ENCODE measurements at regions of chr17 and their contacts with region 1.

Region 1: DNA sequence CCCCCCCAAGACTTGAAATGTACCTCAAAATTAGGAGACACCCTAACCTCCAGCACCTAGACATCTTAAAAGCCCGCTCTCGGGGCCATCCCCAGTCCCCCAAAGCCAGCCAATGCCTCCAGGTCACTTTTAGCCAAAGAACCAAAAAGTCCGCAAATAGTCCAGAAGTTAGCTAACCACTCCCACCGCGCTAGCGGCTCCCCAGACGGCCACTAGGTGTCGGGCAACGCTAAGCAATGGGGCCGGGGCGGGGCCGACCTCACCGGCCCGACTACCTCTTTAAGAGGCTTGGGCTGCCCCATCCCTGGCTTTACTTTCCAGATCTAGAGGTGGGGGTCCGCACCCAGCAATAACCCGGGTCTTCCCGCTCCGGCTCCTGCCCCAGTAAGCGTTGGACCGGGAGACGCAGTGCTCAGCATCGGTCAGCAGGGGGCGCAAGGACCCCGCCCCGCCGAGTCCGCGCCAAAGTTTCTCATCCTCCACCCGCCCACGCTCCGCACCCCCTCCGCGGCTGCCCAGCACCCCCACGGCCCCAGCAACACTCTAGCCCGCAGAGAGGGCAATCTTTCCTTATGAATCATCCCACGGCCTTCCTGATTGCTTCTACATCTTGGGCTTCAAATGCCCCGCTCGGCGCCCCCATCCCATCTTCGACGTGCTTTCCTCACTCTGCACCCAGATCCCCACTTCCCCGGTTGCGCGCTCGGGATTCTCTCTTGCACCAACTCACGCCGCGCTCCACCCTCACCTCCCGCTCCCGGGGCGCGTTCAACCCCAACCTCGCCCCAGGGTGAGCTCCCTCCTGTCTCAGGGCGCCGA is 765 bp downstream of the COL1A1 start:
- DNase-seq: peak; percentile 90
- ATAC-seq: peak; percentile 78
- H3K4me3 Mint-ChIP-seq: peak overlapping the region; percentile 67
- H3K27ac Mint-ChIP-seq: no peak overlapping the region
- H3K4me1 Mint-ChIP-seq: peaks cover 20% of the 10 kb centered on the region
- H3K27me3 Mint-ChIP-seq: peaks cover 47% of the 10 kb centered on the region
- CTCF ChIP-seq: peak; percentile 100

Region 2: GRCh38 chr17:50049636-50050035 is 151.0 kb before region 1 on chr17:
- CTCF ChIA-PET with region 1: no interaction called
- POLR2A ChIA-PET with region 1: no interaction called
- intact Hi-C with region 1: no loop called
- DNase-seq: no peak
- ATAC-seq: no peak
- H3K4me3 Mint-ChIP-seq: no peak overlapping the region
- H3K27ac Mint-ChIP-seq: no peak overlapping the region
- H3K4me1 Mint-ChIP-seq: peaks cover 23% of the 10 kb centered on the region
- H3K27me3 Mint-ChIP-seq: no peaks in the 10 kb centered on the region
- CTCF ChIP-seq: no peak

Region 3: GRCh38 chr17:50114849-50115357 is 85.8 kb before region 1 on chr17:
- CTCF ChIA-PET with region 1: interaction called, 12 read pairs
- POLR2A ChIA-PET with region 1: no interaction called
- intact Hi-C with region 1: no loop called
- DNase-seq: peak; percentile 75
- ATAC-seq: peak; percentile 69
- H3K4me3 Mint-ChIP-seq: no peak overlapping the region
- H3K27ac Mint-ChIP-seq: no peak overlapping the region
- H3K4me1 Mint-ChIP-seq: peaks cover 12% of the 10 kb centered on the region
- H3K27me3 Mint-ChIP-seq: peaks cover 29% of the 10 kb centered on the region
- CTCF ChIP-seq: peak; percentile 63

Region 4: DNA sequence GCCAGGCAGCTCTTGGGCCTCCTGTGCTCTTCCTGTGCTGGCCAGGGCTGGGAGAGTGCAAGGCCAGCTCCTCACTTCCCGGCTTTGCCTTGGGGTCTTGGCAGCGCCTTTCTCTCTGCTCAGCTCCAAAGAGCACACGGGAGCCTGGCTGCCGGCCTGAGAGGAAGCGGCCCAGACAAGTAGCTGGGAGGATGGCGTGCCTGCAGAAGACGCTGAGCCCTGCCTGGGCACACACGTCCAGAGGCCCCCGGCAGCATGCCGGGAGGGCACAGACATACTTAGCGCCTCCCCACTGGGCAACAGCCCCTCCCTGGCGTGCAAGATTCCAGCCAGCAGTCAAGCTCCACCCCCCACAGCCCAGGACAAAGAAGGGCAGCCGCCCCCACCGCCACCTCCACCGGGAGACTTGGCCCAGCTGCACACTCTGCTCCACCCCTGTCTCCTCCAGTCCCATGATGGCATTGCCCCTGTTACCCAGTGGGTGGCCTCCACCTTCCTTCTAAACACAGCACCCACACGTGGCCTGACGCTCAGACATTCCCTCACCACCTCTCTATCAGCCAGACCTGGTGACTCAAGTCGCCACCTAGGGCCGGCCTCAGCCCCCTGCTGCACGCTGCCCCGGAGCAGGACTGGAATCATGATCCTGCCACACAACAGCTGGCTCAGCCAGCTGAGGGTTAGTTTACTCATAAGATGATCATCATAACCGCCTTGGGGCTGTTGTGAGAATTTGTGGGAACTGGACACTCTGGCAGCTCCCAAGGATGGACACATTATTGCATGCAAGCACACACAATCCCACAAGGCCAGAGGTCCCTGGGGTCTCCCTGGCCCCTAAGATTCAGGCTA is 22.5 kb before region 1 on chr17:
- CTCF ChIA-PET with region 1: interaction called, 22 read pairs
- POLR2A ChIA-PET with region 1: no interaction called
- intact Hi-C with region 1: no loop called
- DNase-seq: peak; percentile 70
- ATAC-seq: peak; percentile 93
- H3K4me3 Mint-ChIP-seq: no peak overlapping the region
- H3K27ac Mint-ChIP-seq: peak overlapping the region; percentile 2
- H3K4me1 Mint-ChIP-seq: peaks cover 6% of the 10 kb centered on the region
- H3K27me3 Mint-ChIP-seq: no peaks in the 10 kb centered on the region
- CTCF ChIP-seq: peak; percentile 42

Region 5: DNA sequence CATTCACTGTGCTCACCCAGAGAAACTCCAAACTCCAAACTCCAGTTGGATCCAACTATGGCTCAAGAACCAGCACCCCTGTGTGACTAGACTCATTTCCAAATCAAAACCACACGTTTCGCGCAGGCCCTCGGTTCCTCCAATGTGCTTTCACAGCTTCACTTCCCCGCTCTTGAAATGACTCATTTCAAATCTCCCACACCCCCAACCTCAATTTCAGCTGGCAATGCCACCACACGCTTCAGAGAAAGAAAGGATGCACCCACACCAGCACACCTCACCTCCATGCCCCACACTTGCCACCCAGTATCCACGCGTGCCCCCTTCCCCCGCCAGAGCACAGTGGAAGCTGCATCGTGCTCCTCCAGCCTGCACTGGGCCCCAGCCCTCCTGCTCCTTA is 82.6 kb after region 1 on chr17:
- CTCF ChIA-PET with region 1: interaction called, 209 read pairs
- POLR2A ChIA-PET with region 1: no interaction called
- intact Hi-C with region 1: no loop called
- DNase-seq: peak; percentile 61
- ATAC-seq: peak; percentile 65
- H3K4me3 Mint-ChIP-seq: no peak overlapping the region
- H3K27ac Mint-ChIP-seq: peak overlapping the region; percentile 21
- H3K4me1 Mint-ChIP-seq: peaks cover 11% of the 10 kb centered on the region
- H3K27me3 Mint-ChIP-seq: peaks cover 20% of the 10 kb centered on the region
- CTCF ChIP-seq: no peak

Region 6: DNA sequence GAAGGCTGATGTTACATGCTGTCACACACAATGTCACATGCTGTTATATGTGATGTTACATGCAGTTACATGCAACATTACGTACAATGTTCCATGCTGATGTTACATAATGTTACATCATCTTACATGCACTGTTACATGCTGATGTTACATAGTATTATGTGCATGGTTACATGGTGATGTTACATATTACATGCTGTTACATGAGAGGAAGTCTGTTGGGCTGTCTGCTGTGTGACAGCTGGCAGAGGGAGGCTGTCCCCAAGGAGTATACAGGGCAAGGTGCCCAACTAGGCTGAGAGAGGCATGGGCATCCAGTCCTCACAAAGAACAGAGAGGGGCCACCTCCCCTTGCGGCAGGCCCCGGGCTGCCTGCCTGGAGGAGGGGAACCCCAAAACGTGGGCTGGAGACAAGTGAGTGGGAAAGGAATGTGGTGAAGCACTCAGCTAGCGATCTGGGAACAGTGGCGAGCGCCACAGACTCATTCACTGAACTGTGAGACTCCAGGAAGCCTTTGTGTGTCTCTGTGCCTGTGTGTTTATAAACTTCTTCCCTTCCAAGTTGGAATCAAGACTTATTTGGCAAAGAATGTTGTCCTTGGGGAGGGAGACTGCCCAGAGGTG is 104.2 kb after region 1 on chr17:
- CTCF ChIA-PET with region 1: interaction called, 157 read pairs
- POLR2A ChIA-PET with region 1: no interaction called
- intact Hi-C with region 1: no loop called
- DNase-seq: no peak
- ATAC-seq: no peak
- H3K4me3 Mint-ChIP-seq: no peak overlapping the region
- H3K27ac Mint-ChIP-seq: no peak overlapping the region
- H3K4me1 Mint-ChIP-seq: peaks cover 15% of the 10 kb centered on the region
- H3K27me3 Mint-ChIP-seq: peaks cover 6% of the 10 kb centered on the region
- CTCF ChIP-seq: no peak

Region 7: GRCh38 chr17:50397111-50397918 is 196.6 kb after region 1 on chr17 and contains the start of gene LRRC59:
- CTCF ChIA-PET with region 1: interaction called, 13 read pairs
- POLR2A ChIA-PET with region 1: no interaction called
- intact Hi-C with region 1: no loop called
- DNase-seq: peak; percentile 93
- ATAC-seq: peak; percentile 100
- H3K4me3 Mint-ChIP-seq: peak within 1 kb of the TSS; percentile 89
- H3K27ac Mint-ChIP-seq: peak within 1 kb of the TSS; percentile 90
- H3K4me1 Mint-ChIP-seq: peaks cover 30% of the 10 kb centered on the region
- H3K27me3 Mint-ChIP-seq: no peaks in the 10 kb centered on the region
- CTCF ChIP-seq: peak; percentile 97
- total RNA-seq, gene LRRC59: 70.6 to 71.0 TPM